AG04450 (cell line): ENCODE measurements at regions of chr12 and their contacts with region 1.

Region 1: GRCh38 chr12:76055393-76055792 is 23.8 kb upstream of the PHLDA1 start:
- DNase-seq: no peak
- H3K4me3 ChIP-seq: no peak overlapping the region
- H3K27ac ChIP-seq: no peak overlapping the region
- H3K27me3 ChIP-seq: no peaks in the 10 kb centered on the region
- CTCF ChIP-seq: peak; percentile 21; the same call in 1 of the 2 replicates

Region 2: DNA sequence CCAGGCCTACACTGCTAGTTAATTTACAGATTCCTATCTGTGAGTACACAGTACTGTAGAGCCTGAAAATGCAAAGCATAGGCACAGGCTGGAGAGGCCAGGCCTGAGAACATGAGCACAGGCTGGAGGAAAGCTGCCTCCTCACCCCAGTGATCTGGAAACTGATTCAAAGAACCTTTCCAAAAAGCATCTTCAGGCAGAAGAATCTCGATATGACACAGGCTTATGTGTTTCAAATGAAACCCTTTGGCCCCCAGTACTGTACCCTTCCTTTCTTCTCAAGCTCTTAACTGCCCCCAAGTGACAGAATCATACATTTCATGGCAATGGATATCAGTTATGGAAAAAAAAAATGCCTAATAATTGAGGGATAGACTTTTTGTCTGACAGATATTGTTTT is 967.7 kb before region 1 on chr12:
- CTCF ChIA-PET with region 1: no interaction called
- POLR2A ChIA-PET with region 1: no interaction called
- DNase-seq: no peak
- H3K4me3 ChIP-seq: no peak overlapping the region
- H3K27ac ChIP-seq: no peak overlapping the region
- H3K27me3 ChIP-seq: no peaks in the 10 kb centered on the region
- CTCF ChIP-seq: no peak

Region 3: DNA sequence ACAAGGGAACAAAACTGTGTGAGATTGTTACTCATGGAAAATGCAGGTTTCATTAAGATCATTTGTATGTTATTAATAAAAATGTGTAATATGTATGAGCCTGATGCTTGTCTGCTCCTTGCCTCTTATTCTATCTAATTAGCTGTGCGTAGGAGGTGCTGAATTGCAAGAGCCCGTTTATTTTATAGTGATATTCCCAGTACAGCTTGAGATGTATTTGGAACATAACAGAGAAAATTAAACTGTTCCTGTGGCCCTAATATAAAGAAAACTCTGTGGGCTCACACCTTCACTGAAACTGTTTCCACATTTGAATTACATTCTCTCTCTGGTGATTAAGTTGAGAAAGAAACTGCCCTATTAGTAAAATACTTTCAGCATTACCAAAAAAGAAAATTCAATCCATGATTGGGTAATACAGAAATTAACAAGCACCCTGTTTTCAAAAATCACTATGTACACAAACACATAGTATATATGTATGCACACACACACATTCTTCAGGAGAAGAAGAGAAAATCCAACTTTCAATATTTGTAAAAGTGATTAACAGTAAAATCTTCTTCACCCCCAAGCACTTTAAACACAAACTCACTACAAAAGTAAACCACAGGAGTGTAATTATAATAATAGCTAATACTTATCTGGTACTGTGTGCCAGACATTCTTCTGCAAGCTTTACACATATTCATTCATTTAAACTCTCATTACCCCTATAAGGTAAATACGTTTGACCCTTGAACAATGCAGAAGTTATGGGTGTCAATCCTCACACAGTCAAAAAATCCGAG is 257.1 kb before region 1 on chr12:
- CTCF ChIA-PET with region 1: no interaction called
- POLR2A ChIA-PET with region 1: no interaction called
- DNase-seq: no peak
- H3K4me3 ChIP-seq: no peak overlapping the region
- H3K27ac ChIP-seq: no peak overlapping the region
- H3K27me3 ChIP-seq: no peaks in the 10 kb centered on the region
- CTCF ChIP-seq: no peak

Region 4: GRCh38 chr12:76462668-76463224 is 407.4 kb after region 1 on chr12:
- CTCF ChIA-PET with region 1: interaction called, 12 read pairs
- POLR2A ChIA-PET with region 1: no interaction called
- DNase-seq: no peak
- H3K4me3 ChIP-seq: no peak overlapping the region
- H3K27ac ChIP-seq: no peak overlapping the region
- H3K27me3 ChIP-seq: no peaks in the 10 kb centered on the region
- CTCF ChIP-seq: no peak